B cell (primary cell): ENCODE measurements at regions of chr6 and their contacts with region 1.

Region 1: GRCh38 chr6:37819177-37819823 is at the start of gene ZFAND3:
- DNase-seq: peak; percentile 99
- ATAC-seq: peak; percentile 79
- H3K4me3 ChIP-seq: peak within 1 kb of the TSS; percentile 72 to 100 (median 89)
- H3K4me3 Mint-ChIP-seq: peak within 1 kb of the TSS; percentile 92
- H3K27ac ChIP-seq: peak within 1 kb of the TSS; percentile 90 to 96
- H3K27ac Mint-ChIP-seq: peak within 1 kb of the TSS; percentile 98
- H3K4me1 ChIP-seq: peaks cover 18 to 26% of the 10 kb centered on the region in 2 donors
- H3K4me1 Mint-ChIP-seq: peaks cover 43% of the 10 kb centered on the region
- H3K27me3 ChIP-seq: no peaks in the 10 kb centered on the region
- H3K27me3 Mint-ChIP-seq: no peaks in the 10 kb centered on the region
- CTCF ChIP-seq: no peak
- total RNA-seq, gene ZFAND3: 58.3 and 64.8 TPM in 2 replicates

Region 2: GRCh38 chr6:37353761-37354525 is 465.4 kb before region 1 on chr6 and contains the start of gene RNF8:
- CTCF ChIA-PET with region 1: no interaction called
- POLR2A ChIA-PET with region 1: no interaction called
- intact Hi-C with region 1: loop called (anchors 10 kb)
- DNase-seq: peak; percentile 90
- ATAC-seq: peak; percentile 98
- H3K4me3 ChIP-seq: peak within 1 kb of the TSS; percentile 44 to 98 (median 92)
- H3K4me3 Mint-ChIP-seq: peak within 1 kb of the TSS; percentile 96
- H3K27ac ChIP-seq: peak within 1 kb of the TSS; percentile 34 to 83
- H3K27ac Mint-ChIP-seq: peak within 1 kb of the TSS; percentile 87
- H3K4me1 ChIP-seq: peaks cover 11 to 13% of the 10 kb centered on the region in 2 donors
- H3K4me1 Mint-ChIP-seq: peaks cover 30% of the 10 kb centered on the region
- H3K27me3 ChIP-seq: no peaks in the 10 kb centered on the region
- H3K27me3 Mint-ChIP-seq: no peaks in the 10 kb centered on the region
- CTCF ChIP-seq: no peak
- total RNA-seq, gene RNF8: 16.9 and 18.8 TPM in 2 replicates

Region 3: DNA sequence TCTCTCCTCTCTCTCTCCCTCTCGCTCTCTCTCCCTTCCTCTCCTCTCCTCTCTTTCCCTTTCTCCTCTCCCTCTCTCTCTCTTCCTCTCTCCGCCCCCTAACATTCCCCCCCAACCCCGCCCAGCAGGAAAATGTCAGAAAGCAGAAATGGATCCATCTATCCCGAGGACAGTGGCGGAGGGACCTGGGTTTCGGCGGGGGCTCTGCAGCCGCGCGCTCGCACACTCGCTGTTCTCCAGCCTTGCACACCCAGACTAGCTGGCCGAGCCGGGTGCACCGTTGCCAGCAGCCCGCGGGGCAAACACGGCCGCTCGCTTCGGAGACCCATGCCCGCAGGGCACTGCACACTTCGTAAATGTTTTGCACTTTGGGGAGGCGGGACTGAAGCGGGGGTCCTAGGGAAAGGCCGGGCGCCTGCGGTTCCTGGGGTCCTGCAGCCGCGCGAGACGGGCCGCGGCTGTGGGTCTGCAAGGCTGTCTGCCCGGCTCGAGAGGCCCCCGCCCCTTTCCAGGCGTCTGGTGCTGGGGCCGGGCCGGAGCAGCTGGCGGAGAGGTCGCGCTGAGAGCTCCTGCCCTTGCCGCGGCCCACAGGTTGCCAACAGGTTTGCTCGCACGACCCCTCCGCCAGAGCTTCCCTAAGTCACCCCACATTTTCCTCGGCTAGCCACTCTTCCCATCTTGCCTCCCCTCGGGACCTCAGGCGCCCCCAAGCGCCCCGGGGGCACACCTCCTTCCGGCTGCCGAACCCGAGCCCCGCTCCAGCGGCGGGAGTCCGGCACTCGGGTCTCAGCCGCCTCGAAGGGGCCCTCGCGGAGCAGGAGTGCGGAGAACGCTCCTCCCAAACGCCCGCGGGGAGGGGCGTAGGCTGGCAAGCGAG is 120.8 kb before region 1 on chr6:
- CTCF ChIA-PET with region 1: interaction called, 5 read pairs
- POLR2A ChIA-PET with region 1: interaction called, 9 read pairs
- intact Hi-C with region 1: loop called (anchors 1 kb)
- DNase-seq: peak; percentile 83
- ATAC-seq: peak; percentile 37
- H3K4me3 ChIP-seq: peak overlapping the region; percentile 40 to 72 (median 60)
- H3K4me3 Mint-ChIP-seq: peak overlapping the region; percentile 88
- H3K27ac ChIP-seq: no peak overlapping the region
- H3K27ac Mint-ChIP-seq: peak overlapping the region; percentile 90
- H3K4me1 ChIP-seq: peaks cover 24 to 25% of the 10 kb centered on the region in 2 donors
- H3K4me1 Mint-ChIP-seq: peaks cover 26% of the 10 kb centered on the region
- H3K27me3 ChIP-seq: peaks cover 0 to 37% (median 18%) of the 10 kb centered on the region in 4 experiments
- H3K27me3 Mint-ChIP-seq: peaks cover 27% of the 10 kb centered on the region
- CTCF ChIP-seq: no peak

Region 4: GRCh38 chr6:37791156-37791919 is 28.0 kb before region 1 on chr6:
- CTCF ChIA-PET with region 1: no interaction called
- POLR2A ChIA-PET with region 1: interaction called, 4 read pairs
- intact Hi-C with region 1: loop called (anchors 1 kb)
- DNase-seq: peak; percentile 72
- ATAC-seq: peak; percentile 100
- H3K4me3 ChIP-seq: no peak overlapping the region
- H3K4me3 Mint-ChIP-seq: no peak overlapping the region
- H3K27ac ChIP-seq: no peak overlapping the region
- H3K27ac Mint-ChIP-seq: peak overlapping the region; percentile 17
- H3K4me1 ChIP-seq: peaks cover 0 to 3% of the 10 kb centered on the region in 2 donors
- H3K4me1 Mint-ChIP-seq: peaks cover 6% of the 10 kb centered on the region
- H3K27me3 ChIP-seq: no peaks in the 10 kb centered on the region
- H3K27me3 Mint-ChIP-seq: peaks cover 7% of the 10 kb centered on the region
- CTCF ChIP-seq: peak; percentile 88

Region 5: DNA sequence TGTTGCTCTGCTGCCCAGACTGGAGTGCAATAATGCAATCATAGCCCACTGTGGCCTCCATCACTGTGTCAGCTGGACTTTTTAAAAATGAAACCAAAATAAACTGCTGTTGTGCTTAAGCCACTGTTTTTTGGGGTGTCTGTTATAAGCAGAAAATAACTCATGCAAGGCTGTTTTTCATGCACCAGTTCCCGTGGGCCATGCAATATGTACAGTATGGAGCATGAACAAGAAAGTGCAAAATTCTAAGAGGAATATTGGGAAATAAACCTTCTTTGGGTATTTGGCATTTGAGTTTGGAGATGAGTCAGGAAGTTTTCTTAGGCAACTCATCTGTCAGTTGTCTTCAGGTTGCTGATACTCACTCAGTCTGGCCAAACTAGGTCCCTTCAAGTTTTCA is 14.7 kb before region 1 on chr6:
- CTCF ChIA-PET with region 1: no interaction called
- POLR2A ChIA-PET with region 1: no interaction called
- intact Hi-C with region 1: no loop called
- DNase-seq: no peak
- ATAC-seq: no peak
- H3K4me3 ChIP-seq: no peak overlapping the region
- H3K4me3 Mint-ChIP-seq: no peak overlapping the region
- H3K27ac ChIP-seq: no peak overlapping the region
- H3K27ac Mint-ChIP-seq: no peak overlapping the region
- H3K4me1 ChIP-seq: no peaks in the 10 kb centered on the region
- H3K4me1 Mint-ChIP-seq: no peaks in the 10 kb centered on the region
- H3K27me3 ChIP-seq: peaks cover 0 to 4% (median 0%) of the 10 kb centered on the region in 4 experiments
- H3K27me3 Mint-ChIP-seq: peaks cover 6% of the 10 kb centered on the region
- CTCF ChIP-seq: no peak

Region 6: DNA sequence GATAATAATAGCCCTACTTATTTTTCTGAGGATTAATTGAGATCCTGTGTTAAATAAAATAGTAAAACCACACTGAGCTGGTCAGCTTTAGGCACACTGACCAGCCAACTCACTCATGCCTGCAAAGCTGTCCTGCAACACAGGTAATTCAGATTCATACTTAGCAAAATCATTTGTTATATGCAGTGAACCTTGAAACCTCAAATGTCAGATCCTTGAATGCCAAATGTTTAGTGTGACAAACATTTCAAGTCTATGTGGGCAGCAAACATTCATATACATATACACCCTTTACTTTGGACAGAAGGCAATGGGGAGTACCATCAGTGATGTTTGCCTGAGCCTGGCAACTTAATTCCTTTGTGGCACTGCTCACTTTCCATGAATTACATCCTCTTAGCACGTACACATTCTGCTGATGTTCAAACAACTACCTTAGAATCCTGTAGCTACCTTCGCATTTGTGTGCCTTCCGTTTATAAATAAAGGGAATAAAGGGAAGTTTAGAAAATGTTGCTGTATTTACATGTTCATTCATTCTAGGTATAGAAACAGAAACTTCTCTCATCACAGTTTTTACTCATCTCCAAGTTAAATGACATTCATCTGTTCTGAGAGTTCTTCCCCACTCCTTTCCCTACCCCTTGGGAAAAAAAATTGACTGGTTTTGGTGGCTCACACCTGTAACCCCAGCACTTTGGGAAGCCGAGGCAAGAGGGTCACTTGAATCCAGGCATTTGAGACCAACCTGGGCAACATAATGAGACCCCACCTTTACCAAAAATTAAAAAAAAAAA is 141.0 kb after region 1 on chr6:
- CTCF ChIA-PET with region 1: no interaction called
- POLR2A ChIA-PET with region 1: no interaction called
- intact Hi-C with region 1: no loop called
- DNase-seq: no peak
- ATAC-seq: peak; percentile 41
- H3K4me3 ChIP-seq: no peak overlapping the region
- H3K4me3 Mint-ChIP-seq: peak overlapping the region; percentile 50
- H3K27ac ChIP-seq: no peak overlapping the region
- H3K27ac Mint-ChIP-seq: peak overlapping the region; percentile 13
- H3K4me1 ChIP-seq: peaks cover 8 to 17% of the 10 kb centered on the region in 2 donors
- H3K4me1 Mint-ChIP-seq: peaks cover 63% of the 10 kb centered on the region
- H3K27me3 ChIP-seq: no peaks in the 10 kb centered on the region
- H3K27me3 Mint-ChIP-seq: no peaks in the 10 kb centered on the region
- CTCF ChIP-seq: no peak

Region 7: DNA sequence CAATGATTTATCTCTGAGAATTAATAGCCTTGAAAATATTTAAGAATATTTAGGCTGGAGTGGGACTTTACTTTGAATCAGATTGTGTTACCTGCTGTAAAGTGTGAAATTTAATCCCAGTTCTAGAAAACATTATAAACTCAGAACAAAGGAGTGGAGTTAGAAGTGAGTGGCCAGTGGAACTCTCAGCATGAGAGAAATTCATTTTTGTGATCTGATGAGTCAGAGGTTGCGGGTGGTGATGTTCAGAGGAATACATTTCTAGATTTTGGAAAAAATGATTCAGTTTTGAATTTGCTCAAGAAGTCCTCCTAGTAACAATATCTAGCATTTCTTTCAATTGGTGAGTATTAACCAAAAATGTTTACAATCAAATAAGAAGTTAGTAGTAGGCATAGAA is 167.7 kb after region 1 on chr6:
- CTCF ChIA-PET with region 1: no interaction called
- POLR2A ChIA-PET with region 1: no interaction called
- intact Hi-C with region 1: loop called (anchors 10 kb)
- DNase-seq: no peak
- ATAC-seq: no peak
- H3K4me3 ChIP-seq: no peak overlapping the region
- H3K4me3 Mint-ChIP-seq: no peak overlapping the region
- H3K27ac ChIP-seq: no peak overlapping the region
- H3K27ac Mint-ChIP-seq: no peak overlapping the region
- H3K4me1 ChIP-seq: peaks cover 17% of the 10 kb centered on the region in 2 donors
- H3K4me1 Mint-ChIP-seq: peaks cover 67% of the 10 kb centered on the region
- H3K27me3 ChIP-seq: no peaks in the 10 kb centered on the region
- H3K27me3 Mint-ChIP-seq: no peaks in the 10 kb centered on the region
- CTCF ChIP-seq: no peak

Region 8: GRCh38 chr6:38169977-38170526 is 350.8 kb after region 1 on chr6:
- CTCF ChIA-PET with region 1: no interaction called
- POLR2A ChIA-PET with region 1: no interaction called
- intact Hi-C with region 1: no loop called
- DNase-seq: no peak
- ATAC-seq: no peak
- H3K4me3 ChIP-seq: no peak overlapping the region
- H3K4me3 Mint-ChIP-seq: no peak overlapping the region
- H3K27ac ChIP-seq: no peak overlapping the region
- H3K27ac Mint-ChIP-seq: no peak overlapping the region
- H3K4me1 ChIP-seq: no peaks in the 10 kb centered on the region
- H3K4me1 Mint-ChIP-seq: no peaks in the 10 kb centered on the region
- H3K27me3 ChIP-seq: no peaks in the 10 kb centered on the region
- H3K27me3 Mint-ChIP-seq: no peaks in the 10 kb centered on the region
- CTCF ChIP-seq: no peak

Region 9: GRCh38 chr6:38702558-38703397 is 883.5 kb after region 1 on chr6 and contains the start of gene GLO1:
- CTCF ChIA-PET with region 1: no interaction called
- POLR2A ChIA-PET with region 1: no interaction called
- intact Hi-C with region 1: loop called (anchors 2 kb)
- DNase-seq: peak; percentile 96
- ATAC-seq: peak; percentile 100
- H3K4me3 ChIP-seq: peak within 1 kb of the TSS; percentile 52 to 92 (median 88)
- H3K4me3 Mint-ChIP-seq: peak within 1 kb of the TSS; percentile 91
- H3K27ac ChIP-seq: peak within 1 kb of the TSS; percentile 91 to 92
- H3K27ac Mint-ChIP-seq: peak within 1 kb of the TSS; percentile 91
- H3K4me1 ChIP-seq: peaks cover 3 to 5% of the 10 kb centered on the region in 2 donors
- H3K4me1 Mint-ChIP-seq: peaks cover 20% of the 10 kb centered on the region
- H3K27me3 ChIP-seq: peaks cover 0 to 6% (median 4%) of the 10 kb centered on the region in 4 experiments
- H3K27me3 Mint-ChIP-seq: peaks cover 12% of the 10 kb centered on the region
- CTCF ChIP-seq: no peak
- total RNA-seq, gene GLO1: 31.6 and 32.6 TPM in 2 replicates